IMR-90 (cell line): ENCODE measurements at regions of chr14 and their contacts with region 1.

Region 1: GRCh38 chr14:38867561-38868150 is 235.4 kb downstream of the SEC23A start:
- DNase-seq: peak; percentile 79
- ATAC-seq: peak; percentile 93
- H3K4me3 ChIP-seq: no peak overlapping the region
- H3K27ac ChIP-seq: no peak overlapping the region
- H3K4me1 ChIP-seq: no peaks in the 10 kb centered on the region
- H3K27me3 ChIP-seq: no peaks in the 10 kb centered on the region
- CTCF ChIP-seq: peak; percentile 77
- POLR2A ChIP-seq: no peak
- RAD21 ChIP-seq: peak; percentile 77

Region 2: DNA sequence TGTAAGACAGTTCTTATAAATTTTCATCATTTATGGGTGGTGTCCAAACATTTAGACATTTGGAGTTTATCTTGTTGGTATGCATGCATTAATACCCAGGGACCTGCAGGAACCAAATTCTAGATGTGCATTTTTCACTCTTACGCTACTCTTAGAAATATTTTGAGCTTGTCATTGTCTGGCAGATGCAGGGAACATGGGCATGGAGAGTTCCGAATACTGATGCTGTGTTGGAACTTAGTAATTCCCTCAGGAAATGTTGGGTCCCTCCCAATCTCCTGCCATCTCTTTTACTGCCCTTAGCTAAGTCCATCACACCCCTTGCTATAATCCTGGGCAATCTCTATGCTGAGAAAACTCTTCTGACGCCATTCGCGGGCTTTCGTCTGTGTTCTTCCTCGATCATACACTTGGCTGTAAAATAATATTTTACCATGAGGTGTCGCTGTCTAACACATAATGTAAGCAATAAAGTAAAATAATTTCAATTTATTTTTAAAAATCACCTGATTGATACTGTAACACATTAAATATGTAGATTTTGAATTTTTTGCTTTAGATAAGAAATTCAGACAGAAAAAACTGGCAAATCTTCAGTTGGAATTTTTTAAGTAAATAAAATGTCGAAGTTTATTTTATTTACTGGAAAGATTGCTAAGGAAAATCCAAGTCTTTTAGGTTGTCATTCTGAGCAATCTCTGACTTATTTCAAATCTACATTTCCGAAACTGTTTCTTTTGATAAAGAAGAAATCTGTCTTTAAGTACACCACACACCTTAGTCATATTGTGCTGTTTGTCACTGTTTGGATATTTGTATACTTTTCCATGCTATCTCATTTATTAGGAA is 964.1 kb before region 1 on chr14:
- CTCF ChIA-PET with region 1: interaction called, 6 read pairs
- POLR2A ChIA-PET with region 1: no interaction called
- dilution Hi-C with region 1: no loop called
- in situ Hi-C with region 1: loop called (anchors 5 kb)
- intact Hi-C with region 1: loop called (anchors 1 kb)
- DNase-seq: peak; percentile 59
- ATAC-seq: peak; percentile 72
- H3K4me3 ChIP-seq: no peak overlapping the region
- H3K27ac ChIP-seq: no peak overlapping the region
- H3K4me1 ChIP-seq: 0 out of 2 replicates have a peak, but pooled peaks cover 2% of the 10 kb centered on the region
- H3K27me3 ChIP-seq: no peaks in the 10 kb centered on the region; the same call in 1 of the 2 replicates
- CTCF ChIP-seq: peak; percentile 77
- POLR2A ChIP-seq: no peak
- RAD21 ChIP-seq: peak; percentile 76

Region 3: DNA sequence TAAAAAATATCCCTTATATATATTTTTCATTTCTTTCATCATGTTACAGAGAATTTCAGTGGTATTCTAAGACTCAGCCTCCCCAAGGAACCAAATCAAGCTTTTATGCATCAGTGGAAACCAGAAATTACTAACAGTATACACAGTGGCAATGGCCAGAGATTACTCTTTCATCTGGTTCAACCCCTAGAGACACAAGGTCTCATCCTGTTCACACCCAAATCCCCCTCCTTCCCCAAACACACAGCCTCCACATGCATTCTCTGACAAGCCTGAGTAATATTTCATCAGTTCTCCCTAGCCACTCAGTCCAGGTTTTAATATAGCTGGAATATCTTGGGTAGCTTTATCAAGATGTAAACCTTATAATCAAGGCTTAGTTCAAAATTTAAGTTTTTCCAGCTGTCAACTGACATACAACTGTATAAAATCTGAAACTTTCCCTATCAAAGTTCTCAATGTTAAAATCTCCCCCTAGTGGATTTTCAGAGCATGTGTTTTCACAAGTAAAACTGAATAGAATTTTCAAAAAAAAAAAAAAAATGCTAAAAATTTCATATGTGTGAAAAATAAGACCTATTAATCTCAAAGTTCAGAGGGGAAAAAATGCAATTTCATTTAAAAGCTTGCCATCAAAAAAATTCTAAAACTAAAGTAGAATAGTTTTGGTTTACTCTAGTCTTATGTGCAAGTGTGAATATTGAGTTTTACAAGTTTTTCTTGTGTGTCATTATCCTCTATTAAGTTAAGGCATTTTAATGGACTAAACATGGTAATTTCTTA is 670.5 kb before region 1 on chr14:
- CTCF ChIA-PET with region 1: no interaction called
- POLR2A ChIA-PET with region 1: no interaction called
- dilution Hi-C with region 1: no loop called
- in situ Hi-C with region 1: loop called (anchors 10 kb)
- intact Hi-C with region 1: loop called (anchors 5 kb)
- DNase-seq: peak; percentile 38
- ATAC-seq: peak; percentile 67; the same call in 1 of the 2 replicates
- H3K4me3 ChIP-seq: no peak overlapping the region
- H3K27ac ChIP-seq: no peak overlapping the region
- H3K4me1 ChIP-seq: peaks cover 9% of the 10 kb centered on the region
- H3K27me3 ChIP-seq: no peaks in the 10 kb centered on the region
- CTCF ChIP-seq: peak; percentile 53
- POLR2A ChIP-seq: no peak
- RAD21 ChIP-seq: peak; percentile 53

Region 4: DNA sequence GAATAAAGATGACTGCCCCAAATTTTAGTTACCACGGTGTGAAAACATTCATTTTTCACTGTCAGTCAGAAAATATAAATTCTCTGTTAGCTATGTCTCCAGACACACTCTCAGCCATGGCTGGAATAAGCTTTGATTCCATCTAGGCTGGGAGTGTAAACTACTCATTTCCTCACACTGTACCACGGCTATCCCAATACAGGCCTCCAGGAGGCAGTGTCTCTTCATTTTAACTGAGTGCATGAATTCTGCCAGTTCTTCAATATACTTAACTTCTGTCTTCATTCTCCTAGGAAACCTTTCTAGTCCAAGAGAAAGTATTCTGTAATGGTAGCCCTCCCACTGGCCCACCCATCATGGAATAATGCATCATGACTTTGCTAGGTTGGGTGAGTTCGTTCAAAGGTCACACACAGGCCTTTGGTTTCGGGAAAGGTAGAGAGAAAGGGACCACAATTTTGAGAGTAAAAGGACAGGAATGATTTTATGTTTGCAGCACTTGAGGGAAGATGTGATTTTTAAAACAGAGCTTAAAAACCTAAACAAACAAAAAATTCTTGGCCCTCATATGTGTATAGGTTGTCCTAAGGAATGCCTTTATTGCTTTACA is 145.7 kb before region 1 on chr14:
- CTCF ChIA-PET with region 1: interaction called, 3 read pairs
- POLR2A ChIA-PET with region 1: no interaction called
- dilution Hi-C with region 1: no loop called
- in situ Hi-C with region 1: no loop called
- intact Hi-C with region 1: loop called (anchors 1 kb)
- DNase-seq: peak; percentile 31
- ATAC-seq: peak; percentile 92
- H3K4me3 ChIP-seq: no peak overlapping the region
- H3K27ac ChIP-seq: no peak overlapping the region
- H3K4me1 ChIP-seq: no peaks in the 10 kb centered on the region
- H3K27me3 ChIP-seq: no peaks in the 10 kb centered on the region
- CTCF ChIP-seq: peak; percentile 69
- POLR2A ChIP-seq: no peak
- RAD21 ChIP-seq: peak; percentile 62

Region 5: GRCh38 chr14:39015360-39015961 is 147.8 kb after region 1 on chr14:
- CTCF ChIA-PET with region 1: interaction called, 4 read pairs
- POLR2A ChIA-PET with region 1: no interaction called
- dilution Hi-C with region 1: no loop called
- in situ Hi-C with region 1: no loop called
- intact Hi-C with region 1: loop called (anchors 1 kb)
- DNase-seq: peak; percentile 59
- ATAC-seq: peak; percentile 84
- H3K4me3 ChIP-seq: no peak overlapping the region
- H3K27ac ChIP-seq: no peak overlapping the region
- H3K4me1 ChIP-seq: 0 out of 2 replicates have a peak, but pooled peaks cover 2% of the 10 kb centered on the region
- H3K27me3 ChIP-seq: no peaks in the 10 kb centered on the region
- CTCF ChIP-seq: peak; percentile 74
- POLR2A ChIP-seq: no peak
- RAD21 ChIP-seq: peak; percentile 69

Region 6: DNA sequence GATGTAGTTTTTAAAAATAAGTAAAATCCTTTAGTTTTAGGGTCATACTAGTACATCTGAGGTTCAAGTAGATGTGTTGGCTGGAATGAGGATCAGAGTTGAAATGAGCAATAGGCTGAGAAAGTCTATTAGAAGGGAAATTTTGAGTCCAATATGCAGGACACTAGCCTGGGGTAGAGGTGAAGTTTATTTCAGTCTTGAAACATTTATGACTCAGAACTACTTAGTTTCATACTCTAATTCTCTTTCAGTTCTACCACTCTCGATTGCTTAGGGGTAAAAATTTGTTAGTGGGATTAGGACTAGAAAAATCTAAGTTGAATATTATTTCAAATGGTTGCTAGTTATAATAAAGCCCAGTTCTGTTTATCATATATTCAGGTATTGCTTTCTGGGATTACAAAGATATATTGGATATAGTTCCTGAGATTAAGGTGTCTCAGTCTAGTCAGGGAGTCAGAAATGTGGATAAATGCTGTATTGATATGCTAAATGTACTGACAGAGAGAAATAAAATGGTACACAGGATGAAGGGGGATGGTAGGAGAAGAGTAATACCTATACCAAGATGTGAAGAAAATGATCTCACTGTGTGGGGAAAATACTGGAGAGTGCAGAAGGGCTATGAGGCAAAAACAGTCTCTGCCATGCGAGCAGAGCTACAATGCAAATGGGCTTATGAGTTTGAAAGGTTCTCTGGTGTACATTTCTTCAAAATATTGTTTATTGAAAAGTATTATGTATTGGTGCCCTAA is 960.4 kb after region 1 on chr14:
- CTCF ChIA-PET with region 1: no interaction called
- POLR2A ChIA-PET with region 1: no interaction called
- dilution Hi-C with region 1: no loop called
- in situ Hi-C with region 1: no loop called
- intact Hi-C with region 1: no loop called
- DNase-seq: no peak
- ATAC-seq: no peak
- H3K4me3 ChIP-seq: no peak overlapping the region
- H3K27ac ChIP-seq: no peak overlapping the region
- H3K4me1 ChIP-seq: no peaks in the 10 kb centered on the region
- H3K27me3 ChIP-seq: no peaks in the 10 kb centered on the region
- CTCF ChIP-seq: no peak
- POLR2A ChIP-seq: no peak
- RAD21 ChIP-seq: no peak